GM12878 (cell line): ENCODE measurements at regions of chr1 and their contacts with region 1.

Region 1: DNA sequence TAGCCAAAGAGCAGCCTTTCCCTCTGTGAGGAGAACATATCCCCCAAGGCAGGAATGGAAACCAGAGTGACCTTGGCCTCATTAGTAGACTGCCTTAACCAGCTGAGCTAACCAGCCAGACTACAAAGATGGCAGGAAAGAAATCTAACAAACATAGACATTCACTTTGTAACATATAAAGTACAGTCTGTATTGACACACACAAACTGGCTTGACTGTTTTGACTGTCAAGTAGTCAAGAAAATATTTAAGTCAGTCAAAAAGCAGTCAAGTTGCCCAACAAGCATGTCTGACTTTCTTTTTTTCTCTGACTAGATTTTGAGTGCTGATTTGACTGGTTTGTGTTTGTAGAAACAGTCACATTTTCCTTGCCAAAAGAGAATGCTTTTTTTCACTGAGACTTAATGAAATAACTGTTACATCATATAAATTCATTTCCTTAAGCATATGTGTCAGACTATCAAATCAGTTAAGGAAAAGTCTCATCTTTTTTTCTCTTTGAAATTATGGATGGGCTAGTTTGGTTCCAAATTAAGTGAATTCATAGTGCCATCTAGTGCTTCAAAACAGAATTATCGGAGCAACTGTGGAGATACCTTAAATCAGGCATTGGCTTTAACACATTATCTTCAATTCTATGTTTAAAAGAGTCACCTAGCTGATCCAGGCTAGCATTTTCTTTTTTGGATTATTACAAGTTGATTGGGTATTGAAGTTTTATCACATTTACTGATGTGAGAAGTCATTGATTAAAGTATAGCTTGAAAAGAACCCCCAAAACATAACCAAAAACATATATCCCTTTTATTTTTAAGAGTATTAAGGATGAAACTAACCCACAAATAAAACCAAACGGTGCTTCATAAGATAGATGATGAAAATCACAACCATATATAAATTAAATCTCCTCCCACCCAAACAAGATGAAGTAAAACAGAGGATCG is 75.0 kb downstream of the ATP6V1G3 start:
- DNase-seq: no peak
- ATAC-seq: peak; percentile 85
- H3K4me3 ChIP-seq: no peak overlapping the region
- H3K27ac ChIP-seq: no peak overlapping the region
- H3K4me1 ChIP-seq: no peaks in the 10 kb centered on the region
- H3K27me3 ChIP-seq: no peaks in the 10 kb centered on the region
- CTCF ChIP-seq: peak; percentile 46 to 74 (median 59)
- EP300 ChIP-seq: no peak
- POLR2A ChIP-seq: no peak
- RAD21 ChIP-seq: peak; percentile 84

Region 2: GRCh38 chr1:197521118-197521739 is 944.2 kb before region 1 on chr1:
- CTCF ChIA-PET with region 1: interaction called, 8 read pairs
- POLR2A ChIA-PET with region 1: no interaction called
- RAD21 ChIA-PET with region 1: interaction called, 3 read pairs
- SMC1A ChIA-PET with region 1: interaction called, 5 read pairs
- in situ Hi-C with region 1: loop called (anchors 5 kb)
- intact Hi-C with region 1: loop called (anchors 5 kb)
- DNase-seq: no peak
- ATAC-seq: peak; percentile 75
- H3K4me3 ChIP-seq: no peak overlapping the region
- H3K27ac ChIP-seq: no peak overlapping the region
- H3K4me1 ChIP-seq: no peaks in the 10 kb centered on the region
- H3K27me3 ChIP-seq: no peaks in the 10 kb centered on the region
- CTCF ChIP-seq: peak; percentile 51 to 64 (median 62)
- EP300 ChIP-seq: no peak
- POLR2A ChIP-seq: no peak
- RAD21 ChIP-seq: peak; percentile 63

Region 3: GRCh38 chr1:197924516-197925123 is 540.9 kb before region 1 on chr1:
- CTCF ChIA-PET with region 1: no interaction called
- POLR2A ChIA-PET with region 1: no interaction called
- RAD21 ChIA-PET with region 1: no interaction called
- SMC1A ChIA-PET with region 1: no interaction called
- in situ Hi-C with region 1: no loop called
- intact Hi-C with region 1: loop called (anchors 10 kb)
- DNase-seq: no peak
- ATAC-seq: peak; percentile 81
- H3K4me3 ChIP-seq: no peak overlapping the region
- H3K27ac ChIP-seq: no peak overlapping the region
- H3K4me1 ChIP-seq: no peaks in the 10 kb centered on the region
- H3K27me3 ChIP-seq: peaks cover 3 to 4% of the 10 kb centered on the region in 2 experiments; a peak in 3 of 4 replicates
- CTCF ChIP-seq: peak; percentile 69 to 73 (median 70)
- EP300 ChIP-seq: no peak
- POLR2A ChIP-seq: no peak
- RAD21 ChIP-seq: peak; percentile 91

Region 4: GRCh38 chr1:198157241-198157846 is 308.1 kb before region 1 on chr1:
- CTCF ChIA-PET with region 1: no interaction called
- POLR2A ChIA-PET with region 1: no interaction called
- RAD21 ChIA-PET with region 1: no interaction called
- SMC1A ChIA-PET with region 1: interaction called, 3 read pairs
- in situ Hi-C with region 1: no loop called
- intact Hi-C with region 1: loop called (anchors 5 kb)
- DNase-seq: no peak
- ATAC-seq: peak; percentile 59
- H3K4me3 ChIP-seq: peak overlapping the region; percentile 95
- H3K27ac ChIP-seq: peak overlapping the region; percentile 91
- H3K4me1 ChIP-seq: peaks cover 12% of the 10 kb centered on the region; the same call in 1 of the 2 replicates
- H3K27me3 ChIP-seq: no peaks in the 10 kb centered on the region
- CTCF ChIP-seq: no peak
- EP300 ChIP-seq: no peak
- POLR2A ChIP-seq: peak; percentile 69
- RAD21 ChIP-seq: no peak

Region 5: GRCh38 chr1:198298640-198299039 is 166.8 kb before region 1 on chr1:
- CTCF ChIA-PET with region 1: no interaction called
- POLR2A ChIA-PET with region 1: no interaction called
- RAD21 ChIA-PET with region 1: no interaction called
- SMC1A ChIA-PET with region 1: interaction called, 3 read pairs
- in situ Hi-C with region 1: no loop called
- intact Hi-C with region 1: loop called (anchors 10 kb)
- DNase-seq: no peak
- ATAC-seq: no peak
- H3K4me3 ChIP-seq: no peak overlapping the region
- H3K27ac ChIP-seq: no peak overlapping the region
- H3K4me1 ChIP-seq: no peaks in the 10 kb centered on the region
- H3K27me3 ChIP-seq: no peaks in the 10 kb centered on the region
- CTCF ChIP-seq: no peak
- EP300 ChIP-seq: no peak
- POLR2A ChIP-seq: no peak
- RAD21 ChIP-seq: no peak

Region 6: DNA sequence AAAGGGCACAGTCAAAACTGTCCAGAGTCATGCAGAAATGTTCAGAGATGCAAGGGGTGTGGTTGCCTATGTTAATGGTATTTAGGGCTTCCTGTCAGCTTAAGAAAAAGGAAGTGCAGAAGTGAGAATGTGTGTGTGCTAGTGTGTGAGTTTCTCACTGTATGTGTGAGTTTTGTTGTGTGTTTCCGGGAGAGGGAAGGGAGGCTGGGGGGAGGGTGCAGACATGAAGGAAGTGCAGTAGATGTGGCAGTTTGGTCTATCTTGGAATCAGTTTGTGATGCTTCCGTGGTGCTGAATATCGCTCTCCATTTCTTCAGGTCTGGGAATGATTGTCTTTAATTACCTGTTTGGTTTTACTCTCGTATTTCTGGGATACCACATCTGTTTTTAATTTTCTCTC is 91.5 kb after region 1 on chr1:
- CTCF ChIA-PET with region 1: no interaction called
- POLR2A ChIA-PET with region 1: no interaction called
- RAD21 ChIA-PET with region 1: no interaction called
- SMC1A ChIA-PET with region 1: no interaction called
- in situ Hi-C with region 1: no loop called
- intact Hi-C with region 1: no loop called
- DNase-seq: peak; percentile 71
- ATAC-seq: peak; percentile 95
- H3K4me3 ChIP-seq: no peak overlapping the region
- H3K27ac ChIP-seq: no peak overlapping the region; the same call in 1 of the 2 replicates
- H3K4me1 ChIP-seq: peaks cover 4% of the 10 kb centered on the region; the same call in 1 of the 2 replicates
- H3K27me3 ChIP-seq: no peaks in the 10 kb centered on the region
- CTCF ChIP-seq: no peak
- EP300 ChIP-seq: 0 out of 4 replicates have a peak, but pooled peaks of 1 of the 2 experiments have one; percentile 43
- POLR2A ChIP-seq: no peak
- RAD21 ChIP-seq: 0 out of 2 replicates have a peak, but pooled peaks have one; percentile 13

Region 7: GRCh38 chr1:198638894-198639635 is 173.6 kb after region 1 on chr1 and contains the start of gene PTPRC:
- CTCF ChIA-PET with region 1: no interaction called
- POLR2A ChIA-PET with region 1: no interaction called
- RAD21 ChIA-PET with region 1: no interaction called
- SMC1A ChIA-PET with region 1: no interaction called
- in situ Hi-C with region 1: no loop called
- intact Hi-C with region 1: loop called (anchors 5 kb)
- DNase-seq: peak; percentile 74
- ATAC-seq: peak; percentile 82
- H3K4me3 ChIP-seq: peak within 1 kb of the TSS; percentile 69
- H3K27ac ChIP-seq: peak within 1 kb of the TSS; percentile 68
- H3K4me1 ChIP-seq: peaks cover 13% of the 10 kb centered on the region
- H3K27me3 ChIP-seq: no peaks in the 10 kb centered on the region
- CTCF ChIP-seq: no peak
- EP300 ChIP-seq: peak in 1 of 2 experiments; percentile 75; a peak in 2 of 4 replicates
- POLR2A ChIP-seq: no peak
- RAD21 ChIP-seq: peak; percentile 24; the same call in 1 of the 2 replicates
- polyA plus RNA-seq, gene PTPRC: 72.9 to 73.6 TPM